CD8-positive, alpha-beta T cell (primary cell): ENCODE measurements at regions of chr13 and their contacts with region 1.

Region 1: DNA sequence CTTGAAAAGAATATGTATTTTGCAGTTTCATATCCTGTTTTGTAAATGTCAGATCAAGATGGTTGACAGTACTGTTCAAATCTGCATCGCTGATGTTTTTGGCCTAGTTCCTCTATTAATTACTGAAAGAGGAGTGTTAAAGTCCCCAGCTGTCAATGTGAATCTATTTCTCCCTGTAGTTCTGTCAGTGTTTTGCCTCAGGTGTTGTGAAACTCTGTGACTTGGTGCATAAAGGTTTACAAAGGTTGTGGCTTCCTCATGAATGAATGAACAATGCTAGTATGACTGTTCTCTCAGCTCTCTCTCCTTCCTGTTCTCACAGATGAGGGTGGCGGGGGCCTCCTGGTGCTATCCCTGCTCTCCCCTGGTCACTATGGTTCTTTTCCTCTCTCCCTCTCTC is 142.4 kb downstream of the MYCBP2 start:
- DNase-seq: peak in 1 of 9 experiments; percentile 5
- ATAC-seq: peak; percentile 20
- H3K4me3 ChIP-seq: no peak overlapping the region
- H3K4me3 Mint-ChIP-seq: no peak overlapping the region
- H3K27ac ChIP-seq: no peak overlapping the region
- H3K27ac Mint-ChIP-seq: peak overlapping the region; percentile 75
- H3K4me1 ChIP-seq: no peaks in the 10 kb centered on the region
- H3K4me1 Mint-ChIP-seq: peaks cover 18% of the 10 kb centered on the region
- H3K27me3 ChIP-seq: no peaks in the 10 kb centered on the region
- H3K27me3 Mint-ChIP-seq: no peaks in the 10 kb centered on the region
- CTCF ChIP-seq: no peak

Region 2: GRCh38 chr13:77079902-77080413 is 104.5 kb before region 1 on chr13:
- CTCF ChIA-PET with region 1: no interaction called
- POLR2A ChIA-PET with region 1: no interaction called
- intact Hi-C with region 1: loop called (anchors 5 to 10 kb)
- DNase-seq: no peak
- ATAC-seq: no peak
- H3K4me3 ChIP-seq: no peak overlapping the region
- H3K4me3 Mint-ChIP-seq: no peak overlapping the region
- H3K27ac ChIP-seq: no peak overlapping the region
- H3K27ac Mint-ChIP-seq: no peak overlapping the region
- H3K4me1 ChIP-seq: no peaks in the 10 kb centered on the region
- H3K4me1 Mint-ChIP-seq: peaks cover 5% of the 10 kb centered on the region
- H3K27me3 ChIP-seq: no peaks in the 10 kb centered on the region
- H3K27me3 Mint-ChIP-seq: no peaks in the 10 kb centered on the region
- CTCF ChIP-seq: no peak

Region 3: GRCh38 chr13:77196052-77196618 is 11.7 kb after region 1 on chr13:
- CTCF ChIA-PET with region 1: no interaction called
- POLR2A ChIA-PET with region 1: no interaction called
- intact Hi-C with region 1: loop called in 1 of 2 experiments (anchors 1 kb)
- DNase-seq: no peak
- ATAC-seq: no peak
- H3K4me3 ChIP-seq: no peak overlapping the region
- H3K4me3 Mint-ChIP-seq: no peak overlapping the region
- H3K27ac ChIP-seq: no peak overlapping the region
- H3K27ac Mint-ChIP-seq: no peak overlapping the region
- H3K4me1 ChIP-seq: no peaks in the 10 kb centered on the region
- H3K4me1 Mint-ChIP-seq: peaks cover 3% of the 10 kb centered on the region
- H3K27me3 ChIP-seq: no peaks in the 10 kb centered on the region
- H3K27me3 Mint-ChIP-seq: no peaks in the 10 kb centered on the region
- CTCF ChIP-seq: no peak